ENCODE measurements at regions of chr1 and their contacts with region 1.

Region 1: GRCh38 chr1:31938174-31938950 is at the start of gene PTP4A2:
- DNase-seq: peak; percentile 100
- H3K4me3 ChIP-seq: peak within 1 kb of the TSS; percentile 58 to 78
- H3K27ac ChIP-seq: peak within 1 kb of the TSS; percentile 76 to 86
- H3K4me1 ChIP-seq: peaks cover 10 to 43% of the 10 kb centered on the region in 2 experiments
- H3K27me3 ChIP-seq: no peaks in the 10 kb centered on the region
- CTCF ChIP-seq: no peak; the same call in 1 of the 2 replicates
- EP300 ChIP-seq: no peak
- RAD21 ChIP-seq: no peak
- polyA plus RNA-seq, gene PTP4A2: 41.7 and 46.7 TPM in 2 replicates

Region 2: DNA sequence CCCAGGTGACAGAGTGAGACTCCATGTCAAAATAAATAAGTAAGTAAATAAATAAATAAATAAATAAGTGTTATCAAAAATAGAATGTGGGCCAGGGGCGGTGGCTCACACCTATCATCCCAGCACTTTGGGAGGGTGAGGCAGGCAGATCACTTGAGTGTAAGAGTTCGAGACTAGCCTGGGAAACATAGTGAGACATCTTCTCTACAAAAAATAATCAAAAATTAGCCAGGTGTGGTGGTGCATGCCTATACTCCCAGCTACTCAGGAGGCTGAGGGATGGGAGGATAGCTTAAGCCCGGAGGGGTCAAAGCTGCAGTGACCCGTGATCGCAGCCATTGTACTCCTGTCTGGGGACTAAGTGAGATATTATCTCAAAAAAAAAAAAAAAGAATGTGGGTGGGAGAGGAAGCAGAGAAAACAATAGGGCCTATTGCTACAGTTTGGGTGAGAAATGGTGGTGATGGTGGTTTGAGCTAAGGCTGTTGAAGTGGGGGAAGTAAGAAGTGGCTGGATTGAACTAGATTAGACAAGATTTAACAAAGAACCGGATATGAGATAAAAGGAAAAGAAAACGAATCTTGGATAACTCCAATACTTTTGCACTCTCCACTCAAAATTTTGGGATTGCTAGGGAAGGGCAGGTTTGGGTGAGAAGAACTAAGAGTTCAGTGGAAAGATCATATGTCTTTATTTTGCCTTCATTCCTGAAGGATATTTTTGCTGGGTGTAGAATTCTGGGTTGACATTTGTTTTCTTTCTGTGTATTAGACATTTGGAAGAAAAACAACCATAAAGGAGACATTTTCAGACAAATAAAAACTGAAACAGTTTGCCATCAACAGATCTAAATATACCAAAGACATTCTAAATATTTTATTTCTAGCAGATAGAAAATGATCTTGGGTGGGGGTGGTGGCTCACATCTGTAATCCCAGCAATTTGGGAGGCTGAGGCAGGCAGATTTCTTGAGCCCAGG is 65.4 kb before region 1 on chr1:
- CTCF ChIA-PET with region 1: no interaction called
- POLR2A ChIA-PET with region 1: no interaction called
- DNase-seq: no peak
- H3K4me3 ChIP-seq: no peak overlapping the region
- H3K27ac ChIP-seq: no peak overlapping the region
- H3K4me1 ChIP-seq: no peaks in the 10 kb centered on the region
- H3K27me3 ChIP-seq: no peaks in the 10 kb centered on the region
- CTCF ChIP-seq: no peak
- EP300 ChIP-seq: no peak
- RAD21 ChIP-seq: no peak

Region 3: DNA sequence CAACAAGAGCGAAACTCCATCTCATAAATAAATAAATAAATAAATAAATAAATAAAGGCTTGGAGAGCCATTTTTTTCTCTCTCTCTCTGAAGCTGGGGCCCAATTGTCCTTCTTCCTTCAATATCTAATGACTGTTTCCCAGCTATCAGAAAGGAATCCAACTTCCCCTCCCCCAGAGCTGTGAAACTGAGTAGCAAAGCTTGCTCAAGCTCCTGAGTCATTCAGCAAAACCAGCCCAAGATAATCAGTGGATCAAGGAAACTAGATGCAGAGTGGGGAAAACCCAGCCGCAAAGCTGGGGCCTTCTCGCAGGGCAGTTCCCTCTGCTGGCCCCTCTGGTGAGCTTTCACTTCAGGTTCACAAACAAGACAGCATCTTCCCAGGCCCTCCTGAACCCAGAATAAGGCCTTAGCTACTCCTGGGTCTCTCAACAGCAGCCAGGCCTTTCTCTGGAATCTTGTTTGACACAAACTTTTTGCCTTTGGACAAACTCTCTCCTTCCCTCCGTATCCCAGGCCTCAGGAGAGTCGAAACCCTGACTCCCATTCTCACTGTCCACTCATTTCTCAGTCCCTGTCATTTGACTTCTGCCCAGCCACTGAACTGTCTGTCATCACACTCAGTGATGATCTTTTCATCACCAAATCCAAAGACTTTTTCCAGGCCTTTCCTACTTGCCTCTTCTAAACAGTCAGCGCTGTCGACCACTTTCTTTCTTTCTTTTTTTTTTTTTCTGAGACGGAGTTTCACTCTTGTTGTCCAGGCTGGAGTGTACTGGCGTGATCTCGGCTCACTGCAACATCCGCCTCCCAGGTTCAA is 17.8 kb after region 1 on chr1:
- CTCF ChIA-PET with region 1: interaction called, 13 read pairs
- POLR2A ChIA-PET with region 1: interaction called, 3 read pairs
- DNase-seq: no peak
- H3K4me3 ChIP-seq: no peak overlapping the region
- H3K27ac ChIP-seq: peak overlapping the region; percentile 5 to 94; a peak in 3 of 4 replicates
- H3K4me1 ChIP-seq: peaks cover 5 to 17% of the 10 kb centered on the region in 2 experiments; a peak in 3 of 4 replicates
- H3K27me3 ChIP-seq: no peaks in the 10 kb centered on the region
- CTCF ChIP-seq: peak; percentile 47
- EP300 ChIP-seq: peak in 1 of 2 experiments; percentile 34; a peak in 1 of 4 replicates
- RAD21 ChIP-seq: no peak; the same call in 1 of the 2 replicates

Measured in SK-N-SH (cell line).